ENCODE measurements at regions of chr9 and their contacts with region 1.

Region 1: GRCh38 chr9:128360826-128361225 is 10.3 kb upstream of the URM1 start:
- DNase-seq: no peak
- H3K4me3 ChIP-seq: no peak overlapping the region
- H3K27ac ChIP-seq: peak overlapping the region in 1 of 2 donors; percentile 60
- H3K4me1 ChIP-seq: peaks cover 0 to 6% of the 10 kb centered on the region in 2 donors
- H3K27me3 ChIP-seq: no peaks in the 10 kb centered on the region
- CTCF ChIP-seq: no peak
- POLR2A ChIP-seq: no peak

Region 2: GRCh38 chr9:128339771-128340690 is 20.8 kb before region 1 on chr9 and contains the start of gene SLC27A4:
- intact Hi-C with region 1: no loop called
- DNase-seq: peak; percentile 52 to 72
- H3K4me3 ChIP-seq: peak within 1 kb of the TSS; percentile 78 to 89 (median 84)
- H3K27ac ChIP-seq: peak within 1 kb of the TSS; percentile 66 to 76
- H3K4me1 ChIP-seq: no peaks in the 10 kb centered on the region
- H3K27me3 ChIP-seq: no peaks in the 10 kb centered on the region
- CTCF ChIP-seq: no peak
- POLR2A ChIP-seq: no peak
- total RNA-seq, gene SLC27A4: 11.3 to 18.7 (median 15.8) TPM

Region 3: GRCh38 chr9:128818839-128819715 is 458.3 kb after region 1 on chr9:
- intact Hi-C with region 1: loop called (anchors 1 kb)
- DNase-seq: no peak
- H3K4me3 ChIP-seq: peak overlapping the region; percentile 67 to 90 (median 69)
- H3K27ac ChIP-seq: peak overlapping the region; percentile 67 to 88
- H3K4me1 ChIP-seq: peaks cover 0 to 5% of the 10 kb centered on the region in 2 donors
- H3K27me3 ChIP-seq: no peaks in the 10 kb centered on the region
- CTCF ChIP-seq: no peak
- POLR2A ChIP-seq: no peak

Measured in breast epithelium (tissue), 4 donors.